ENCODE measurements at regions of chr5 and their contacts with region 1.

Region 1: DNA sequence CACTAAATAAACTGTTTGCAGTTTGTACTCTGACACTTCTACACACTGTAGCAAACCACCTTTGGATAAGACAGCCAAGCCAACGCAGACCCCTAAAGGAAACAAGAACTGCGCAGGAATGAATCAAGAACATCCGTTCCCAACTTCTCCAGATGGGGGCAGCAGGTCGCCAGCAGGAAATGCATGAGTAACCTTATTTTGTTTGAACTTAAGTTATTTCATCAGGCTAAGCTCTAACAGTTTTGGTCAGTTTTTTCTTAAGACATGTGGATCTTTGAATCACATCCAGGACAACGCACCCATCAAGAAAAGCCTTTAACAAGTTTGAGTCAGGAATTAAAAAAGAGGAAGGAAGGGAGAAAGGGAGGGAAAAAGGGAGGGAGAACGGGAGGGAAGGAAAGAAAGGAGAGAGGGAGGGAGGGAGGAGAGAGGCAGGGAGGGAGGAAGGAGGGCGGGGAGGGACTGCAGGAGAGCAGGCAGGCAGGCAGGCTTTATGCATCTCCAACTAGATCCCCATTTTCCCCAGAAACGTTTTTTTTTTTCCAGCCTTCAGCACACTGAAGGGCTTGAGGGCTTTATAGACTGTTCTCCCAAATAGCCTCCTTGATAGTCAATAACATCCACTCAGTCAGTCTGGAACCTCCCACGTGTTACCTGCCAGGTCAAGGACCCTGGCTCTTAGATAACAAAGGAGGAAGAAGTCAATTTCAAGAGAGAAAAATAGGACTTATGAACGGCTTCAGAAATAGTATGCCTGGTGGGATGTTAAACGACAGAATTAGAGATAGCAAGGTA is 22.2 kb downstream of the BHMT start:
- DNase-seq: peak; percentile 49 to 70
- ATAC-seq: peak; percentile 34 to 91 (median 74)
- H3K4me3 ChIP-seq: peak overlapping the region; percentile 57
- H3K27ac ChIP-seq: peak overlapping the region; percentile 44
- H3K4me1 ChIP-seq: peaks cover 2% of the 10 kb centered on the region
- H3K27me3 ChIP-seq: no peaks in the 10 kb centered on the region
- CTCF ChIP-seq: peak; percentile 67

Region 2: DNA sequence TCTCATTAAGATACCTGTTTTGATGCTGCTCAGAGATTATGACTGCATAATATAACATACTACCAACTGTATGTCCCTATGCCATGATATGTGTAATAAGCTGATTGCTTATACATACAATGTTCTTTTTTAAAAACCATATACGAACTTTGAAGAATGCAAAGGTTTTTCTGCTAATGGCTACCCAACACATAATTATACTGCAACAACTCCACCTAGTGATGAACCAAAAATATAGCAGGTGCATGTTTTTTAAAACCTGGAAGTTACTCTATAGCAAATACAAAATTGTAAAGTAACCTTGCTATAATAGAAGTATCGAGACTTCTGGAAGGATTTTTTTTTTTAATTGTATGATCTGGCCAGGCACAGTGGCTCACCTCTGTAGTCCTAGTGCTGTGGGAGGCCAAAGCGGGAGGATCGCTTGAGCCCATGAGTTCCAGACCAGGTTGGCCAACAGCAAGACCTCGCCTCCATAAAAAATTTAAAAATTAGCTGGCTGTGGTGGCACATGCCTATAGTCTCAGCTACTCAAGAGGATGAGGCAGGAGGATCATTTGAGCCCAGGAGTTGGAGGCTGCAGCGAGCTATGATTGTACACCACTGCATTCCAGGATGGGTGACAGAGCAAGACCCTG is 331.0 kb after region 1 on chr5:
- intact Hi-C with region 1: loop called in 1 of 2 experiments (anchors 10 kb)
- DNase-seq: no peak
- ATAC-seq: peak; percentile 16 to 76 (median 60)
- H3K4me3 ChIP-seq: no peak overlapping the region
- H3K27ac ChIP-seq: no peak overlapping the region
- H3K4me1 ChIP-seq: peaks cover 18% of the 10 kb centered on the region
- H3K27me3 ChIP-seq: no peaks in the 10 kb centered on the region
- CTCF ChIP-seq: peak; percentile 61